ENCODE measurements at regions of chr1 and their contacts with region 1.

Region 1: DNA sequence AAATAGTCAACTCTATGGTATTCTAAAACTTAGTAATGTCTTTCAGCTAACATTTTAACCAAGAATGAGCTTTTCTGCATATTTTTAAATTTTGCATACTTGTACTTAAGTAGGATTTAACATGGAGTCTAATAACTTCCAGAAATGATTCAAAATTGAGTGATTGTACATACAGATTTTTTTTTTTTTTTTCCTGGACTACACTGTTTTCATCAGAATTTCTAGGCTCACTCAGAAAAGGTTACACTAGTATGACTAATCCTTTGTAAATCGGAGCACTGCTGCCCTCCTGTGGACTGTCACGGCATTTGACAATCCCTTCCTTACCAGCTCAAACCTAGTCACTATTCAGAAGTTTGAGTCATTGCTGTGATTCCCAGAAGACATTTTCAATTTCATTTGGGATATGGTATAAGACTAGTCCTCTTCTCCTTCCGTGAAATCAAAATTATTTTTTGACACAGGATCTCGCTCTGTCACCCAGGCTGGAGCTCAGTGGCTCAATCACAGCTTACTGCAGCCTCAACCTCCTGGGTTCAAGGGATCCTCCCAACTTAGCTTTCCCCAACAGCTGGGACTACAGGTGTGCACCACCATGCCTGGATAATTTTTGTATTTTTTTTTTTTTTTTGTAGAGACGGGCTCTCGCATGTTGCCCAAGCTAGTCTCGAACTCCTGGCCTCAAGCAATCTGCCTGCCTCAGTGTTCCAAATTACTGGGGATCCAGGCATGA is 45.5 kb downstream of the CD46 start:
- DNase-seq: peak; percentile 87
- ATAC-seq: peak; percentile 85
- H3K4me3 Mint-ChIP-seq: no peak overlapping the region
- H3K27ac Mint-ChIP-seq: no peak overlapping the region
- H3K4me1 Mint-ChIP-seq: peaks cover 42% of the 10 kb centered on the region
- H3K27me3 Mint-ChIP-seq: no peaks in the 10 kb centered on the region

Region 2: GRCh38 chr1:207579436-207579799 is 218.0 kb before region 1 on chr1:
- CTCF ChIA-PET with region 1: interaction called, 18 read pairs
- DNase-seq: peak; percentile 68
- ATAC-seq: peak; percentile 95
- H3K4me3 Mint-ChIP-seq: no peak overlapping the region
- H3K27ac Mint-ChIP-seq: no peak overlapping the region
- H3K4me1 Mint-ChIP-seq: peaks cover 2% of the 10 kb centered on the region
- H3K27me3 Mint-ChIP-seq: peaks cover 32% of the 10 kb centered on the region

Region 3: DNA sequence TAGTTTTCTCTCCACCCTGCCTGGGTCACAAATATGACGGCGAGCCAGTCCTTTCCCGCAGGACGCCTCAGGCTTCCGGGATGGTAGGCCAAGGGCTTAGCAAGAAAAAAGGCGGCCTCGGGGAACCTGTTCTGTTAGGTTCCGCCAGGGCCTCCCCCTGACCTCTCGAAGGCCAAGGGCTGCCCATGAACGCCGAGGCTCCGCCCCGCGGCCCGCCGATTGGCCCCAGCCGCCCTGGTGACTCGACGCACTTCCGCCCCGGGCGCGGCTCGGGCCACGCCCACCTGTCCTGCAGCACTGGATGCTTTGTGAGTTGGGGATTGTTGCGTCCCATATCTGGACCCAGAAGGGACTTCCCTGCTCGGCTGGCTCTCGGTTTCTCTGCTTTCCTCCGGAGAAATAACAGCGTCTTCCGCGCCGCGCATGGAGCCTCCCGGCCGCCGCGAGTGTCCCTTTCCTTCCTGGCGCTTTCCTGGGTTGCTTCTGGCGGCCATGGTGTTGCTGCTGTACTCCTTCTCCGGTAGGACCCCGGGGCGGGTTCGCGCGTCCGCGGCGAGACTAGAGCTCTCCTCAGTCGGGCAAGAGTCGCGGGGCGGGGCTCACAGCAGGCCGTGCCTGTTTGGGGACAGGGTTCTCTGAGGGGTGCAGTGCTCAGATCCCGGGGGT is 45.5 kb before region 1 on chr1 and contains the start of gene CD46:
- CTCF ChIA-PET with region 1: interaction called, 17 read pairs
- DNase-seq: peak; percentile 97
- ATAC-seq: peak; percentile 98
- H3K4me3 Mint-ChIP-seq: peak within 1 kb of the TSS; percentile 99
- H3K27ac Mint-ChIP-seq: peak within 1 kb of the TSS; percentile 93
- H3K4me1 Mint-ChIP-seq: peaks cover 64% of the 10 kb centered on the region
- H3K27me3 Mint-ChIP-seq: no peaks in the 10 kb centered on the region
- total RNA-seq, gene CD46: 98.3 to 104 TPM

Region 4: GRCh38 chr1:207811920-207812720 is 14.7 kb after region 1 on chr1:
- CTCF ChIA-PET with region 1: interaction called, 21 read pairs
- DNase-seq: peak; percentile 38
- ATAC-seq: peak; percentile 31
- H3K4me3 Mint-ChIP-seq: no peak overlapping the region
- H3K27ac Mint-ChIP-seq: no peak overlapping the region
- H3K4me1 Mint-ChIP-seq: peaks cover 42% of the 10 kb centered on the region
- H3K27me3 Mint-ChIP-seq: no peaks in the 10 kb centered on the region

Region 5: GRCh38 chr1:207828485-207829158 is 31.2 kb after region 1 on chr1:
- CTCF ChIA-PET with region 1: interaction called, 26 read pairs
- DNase-seq: peak; percentile 74
- ATAC-seq: peak; percentile 20
- H3K4me3 Mint-ChIP-seq: no peak overlapping the region
- H3K27ac Mint-ChIP-seq: peak overlapping the region; percentile 65
- H3K4me1 Mint-ChIP-seq: peaks cover 95% of the 10 kb centered on the region
- H3K27me3 Mint-ChIP-seq: no peaks in the 10 kb centered on the region

Region 6: GRCh38 chr1:207868774-207869721 is 71.7 kb after region 1 on chr1:
- CTCF ChIA-PET with region 1: interaction called, 30 read pairs
- DNase-seq: peak; percentile 66
- ATAC-seq: peak; percentile 73
- H3K4me3 Mint-ChIP-seq: peak overlapping the region; percentile 93
- H3K27ac Mint-ChIP-seq: peak overlapping the region; percentile 90
- H3K4me1 Mint-ChIP-seq: peaks cover 80% of the 10 kb centered on the region
- H3K27me3 Mint-ChIP-seq: no peaks in the 10 kb centered on the region

Region 7: GRCh38 chr1:207897188-207897587 is 99.8 kb after region 1 on chr1:
- CTCF ChIA-PET with region 1: no interaction called
- DNase-seq: no peak
- ATAC-seq: no peak
- H3K4me3 Mint-ChIP-seq: no peak overlapping the region
- H3K27ac Mint-ChIP-seq: no peak overlapping the region
- H3K4me1 Mint-ChIP-seq: peaks cover 15% of the 10 kb centered on the region
- H3K27me3 Mint-ChIP-seq: peaks cover 5% of the 10 kb centered on the region